ENCODE measurements at regions of chr21 and their contacts with region 1.

Region 1: DNA sequence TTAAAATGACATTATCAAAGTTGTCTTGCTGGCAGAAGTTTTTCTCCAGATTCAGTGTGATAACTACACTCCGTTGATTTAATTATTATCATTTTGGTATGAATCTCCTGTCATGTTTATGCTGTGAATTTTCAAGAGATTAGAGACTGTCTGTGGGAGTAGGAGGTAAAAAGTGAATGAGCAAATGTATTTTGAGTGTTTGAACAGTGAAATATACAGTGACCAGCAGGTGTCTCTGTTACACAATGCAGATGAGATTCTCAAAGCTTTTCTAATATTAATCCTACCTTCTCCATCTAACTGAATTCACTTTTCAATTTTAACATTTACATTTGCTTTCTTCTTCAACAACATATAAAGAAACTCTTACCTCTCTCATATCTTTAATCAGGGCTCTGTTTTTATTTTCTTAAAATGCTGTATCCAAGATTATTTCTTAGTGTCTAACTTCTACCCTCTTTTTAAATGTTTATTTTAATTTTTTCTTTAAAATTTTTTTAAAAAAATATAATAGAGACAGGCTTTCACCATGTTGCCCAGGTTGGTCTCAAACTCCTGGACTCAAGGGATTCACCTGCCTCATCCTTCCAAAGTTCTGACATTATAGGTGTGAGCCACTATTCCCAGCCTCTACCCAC is 20.9 kb upstream of the HSPA13 start:
- DNase-seq: peak; percentile 14 to 50 (median 31)
- H3K4me3 ChIP-seq: no peak overlapping the region
- H3K4me3 Mint-ChIP-seq: no peak overlapping the region
- H3K27ac ChIP-seq: no peak overlapping the region
- H3K27ac Mint-ChIP-seq: no peak overlapping the region
- H3K4me1 ChIP-seq: no peaks in the 10 kb centered on the region
- H3K4me1 Mint-ChIP-seq: no peaks in the 10 kb centered on the region
- H3K27me3 ChIP-seq: no peaks in the 10 kb centered on the region
- H3K27me3 Mint-ChIP-seq: peaks cover 0 to 1% (median 0%) of the 10 kb centered on the region in 3 donors
- CTCF ChIP-seq: peak; percentile 74

Region 2: DNA sequence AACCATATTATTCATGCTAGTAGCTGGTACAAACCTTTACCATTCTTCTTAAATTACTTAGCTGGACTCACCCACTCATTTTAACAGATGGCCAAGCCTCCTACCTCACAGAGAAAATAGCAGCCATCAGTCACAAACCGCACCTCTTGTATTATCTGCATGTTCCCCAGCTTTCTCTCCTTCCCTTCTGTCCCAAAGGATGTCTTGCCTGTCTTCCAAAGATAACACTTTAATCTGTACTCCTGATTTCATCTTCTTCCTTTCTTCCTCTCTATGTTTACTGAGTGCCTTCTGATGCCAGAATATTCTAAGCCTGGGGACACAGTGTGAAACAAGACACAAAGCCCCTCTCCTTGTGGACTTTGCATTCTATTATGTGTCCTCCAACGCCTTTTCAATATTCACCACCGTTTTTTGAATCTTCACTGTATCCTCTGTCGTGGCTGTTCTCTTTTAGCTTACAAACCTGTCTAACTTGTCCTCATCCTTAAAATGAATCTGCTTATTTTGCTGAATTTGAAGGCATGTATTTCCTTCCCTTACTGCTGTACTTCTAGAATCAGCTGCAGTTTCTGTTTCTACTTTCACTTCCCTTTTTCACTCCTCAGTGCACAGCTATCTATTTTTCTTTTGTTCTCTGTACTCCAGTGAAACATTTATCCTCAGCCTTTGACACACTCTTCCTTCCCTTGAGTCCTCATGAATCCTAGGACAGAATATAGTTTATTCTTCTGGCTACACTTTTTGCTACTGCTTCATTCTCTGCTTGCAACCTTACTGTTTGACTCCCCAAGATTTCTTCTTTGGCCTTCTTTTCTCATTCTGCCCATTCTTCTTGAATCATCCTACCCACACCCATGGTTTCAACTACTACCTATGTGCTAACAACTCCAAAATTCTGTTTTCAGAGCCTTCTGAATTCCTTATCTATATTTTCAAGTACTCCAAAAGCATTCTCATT is 359.2 kb after region 1 on chr21:
- intact Hi-C with region 1: loop called in 1 of 2 experiments (anchors 10 kb)
- DNase-seq: peak; percentile 58 to 84 (median 68)
- H3K4me3 ChIP-seq: peak overlapping the region; percentile 27 to 63 (median 61)
- H3K4me3 Mint-ChIP-seq: no peak overlapping the region
- H3K27ac ChIP-seq: peak overlapping the region; percentile 46 to 82
- H3K27ac Mint-ChIP-seq: no peak overlapping the region
- H3K4me1 ChIP-seq: peaks cover 19 to 27% of the 10 kb centered on the region in 2 donors
- H3K4me1 Mint-ChIP-seq: peaks cover 10% of the 10 kb centered on the region
- H3K27me3 ChIP-seq: no peaks in the 10 kb centered on the region
- H3K27me3 Mint-ChIP-seq: peaks cover 0 to 1% (median 0%) of the 10 kb centered on the region in 3 donors
- CTCF ChIP-seq: no peak

Measured in CD14-positive monocyte (primary cell).